ENCODE measurements at regions of chr14 and their contacts with region 1.

Region 1: GRCh38 chr14:73173092-73173735 is 36.9 kb downstream of the PSEN1 start:
- DNase-seq: peak; percentile 9
- H3K4me3 ChIP-seq: no peak overlapping the region
- H3K27ac ChIP-seq: no peak overlapping the region
- H3K4me1 ChIP-seq: no peaks in the 10 kb centered on the region
- H3K27me3 ChIP-seq: no peaks in the 10 kb centered on the region
- CTCF ChIP-seq: peak; percentile 38 to 52

Region 2: DNA sequence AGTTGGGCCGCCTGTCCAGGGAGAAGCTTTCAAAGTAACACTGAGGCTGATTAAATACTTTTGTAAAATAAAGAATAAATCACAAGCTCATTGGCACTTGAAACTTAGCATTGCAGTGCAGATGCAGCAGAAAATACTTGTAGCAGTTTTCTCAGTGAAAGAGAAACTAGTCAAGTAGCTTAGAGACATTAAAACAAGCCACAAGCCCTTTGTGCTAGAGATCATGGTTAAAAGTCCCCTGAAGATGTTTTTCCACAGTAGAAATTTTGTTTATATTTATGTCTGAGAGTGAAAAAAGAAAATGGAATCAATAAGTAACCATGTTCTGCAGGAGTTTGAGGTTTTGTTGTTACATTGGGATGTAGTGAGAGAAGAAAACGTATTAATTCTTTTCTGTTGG is 31.0 kb before region 1 on chr14:
- CTCF ChIA-PET with region 1: no interaction called
- dilution Hi-C with region 1: no loop called
- in situ Hi-C with region 1: no loop called
- intact Hi-C with region 1: no loop called
- DNase-seq: no peak
- H3K4me3 ChIP-seq: no peak overlapping the region
- H3K27ac ChIP-seq: no peak overlapping the region
- H3K4me1 ChIP-seq: peaks cover 11% of the 10 kb centered on the region
- H3K27me3 ChIP-seq: no peaks in the 10 kb centered on the region
- CTCF ChIP-seq: no peak

Region 3: GRCh38 chr14:73153272-73153671 is 19.9 kb before region 1 on chr14:
- CTCF ChIA-PET with region 1: interaction called, 40 read pairs
- dilution Hi-C with region 1: no loop called
- in situ Hi-C with region 1: no loop called
- intact Hi-C with region 1: no loop called
- DNase-seq: no peak
- H3K4me3 ChIP-seq: no peak overlapping the region
- H3K27ac ChIP-seq: no peak overlapping the region
- H3K4me1 ChIP-seq: no peaks in the 10 kb centered on the region
- H3K27me3 ChIP-seq: no peaks in the 10 kb centered on the region
- CTCF ChIP-seq: no peak

Region 4: GRCh38 chr14:73283608-73284379 is 110.6 kb after region 1 on chr14:
- CTCF ChIA-PET with region 1: no interaction called
- dilution Hi-C with region 1: no loop called
- in situ Hi-C with region 1: no loop called
- intact Hi-C with region 1: loop called (anchors 1 kb)
- DNase-seq: no peak
- H3K4me3 ChIP-seq: no peak overlapping the region
- H3K27ac ChIP-seq: no peak overlapping the region
- H3K4me1 ChIP-seq: no peaks in the 10 kb centered on the region
- H3K27me3 ChIP-seq: no peaks in the 10 kb centered on the region
- CTCF ChIP-seq: peak in 1 of 2 donors; percentile 32

Region 5: GRCh38 chr14:73472185-73473114 is 299.2 kb after region 1 on chr14:
- CTCF ChIA-PET with region 1: no interaction called
- dilution Hi-C with region 1: no loop called
- in situ Hi-C with region 1: loop called in 1 of 2 experiments (anchors 10 kb)
- intact Hi-C with region 1: loop called (anchors 1 kb)
- DNase-seq: peak; percentile 54
- H3K4me3 ChIP-seq: no peak overlapping the region
- H3K27ac ChIP-seq: no peak overlapping the region
- H3K4me1 ChIP-seq: peaks cover 3% of the 10 kb centered on the region
- H3K27me3 ChIP-seq: no peaks in the 10 kb centered on the region
- CTCF ChIP-seq: peak; percentile 64 to 67